H1 (cell line): ENCODE measurements at regions of chr20 and their contacts with region 1.

Region 1: GRCh38 chr20:31587545-31588389 is 17.3 kb upstream of the ID1 start:
- DNase-seq: no peak
- H3K4me3 ChIP-seq: peak overlapping the region; percentile 12 to 56 (median 34); a peak in 7 of 8 replicates
- H3K27ac ChIP-seq: no peak overlapping the region
- H3K4me1 ChIP-seq: peaks cover 8 to 31% (median 25%) of the 10 kb centered on the region in 4 experiments
- H3K27me3 ChIP-seq: peaks cover 0 to 15% (median 7%) of the 10 kb centered on the region in 4 experiments; a peak in 5 of 7 replicates
- CTCF ChIP-seq: no peak
- EP300 ChIP-seq: no peak
- POLR2A ChIP-seq: no peak; a peak in 1 of 3 replicates
- RAD21 ChIP-seq: no peak

Region 2: GRCh38 chr20:31543966-31544598 is 43.7 kb before region 1 on chr20:
- CTCF ChIA-PET with region 1: no interaction called
- POLR2A ChIA-PET with region 1: no interaction called
- DNase-seq: no peak
- H3K4me3 ChIP-seq: no peak overlapping the region
- H3K27ac ChIP-seq: no peak overlapping the region
- H3K4me1 ChIP-seq: no peaks in the 10 kb centered on the region; a peak in 3 of 7 replicates
- H3K27me3 ChIP-seq: no peaks in the 10 kb centered on the region
- CTCF ChIP-seq: no peak
- EP300 ChIP-seq: no peak
- POLR2A ChIP-seq: no peak
- RAD21 ChIP-seq: no peak

Region 3: DNA sequence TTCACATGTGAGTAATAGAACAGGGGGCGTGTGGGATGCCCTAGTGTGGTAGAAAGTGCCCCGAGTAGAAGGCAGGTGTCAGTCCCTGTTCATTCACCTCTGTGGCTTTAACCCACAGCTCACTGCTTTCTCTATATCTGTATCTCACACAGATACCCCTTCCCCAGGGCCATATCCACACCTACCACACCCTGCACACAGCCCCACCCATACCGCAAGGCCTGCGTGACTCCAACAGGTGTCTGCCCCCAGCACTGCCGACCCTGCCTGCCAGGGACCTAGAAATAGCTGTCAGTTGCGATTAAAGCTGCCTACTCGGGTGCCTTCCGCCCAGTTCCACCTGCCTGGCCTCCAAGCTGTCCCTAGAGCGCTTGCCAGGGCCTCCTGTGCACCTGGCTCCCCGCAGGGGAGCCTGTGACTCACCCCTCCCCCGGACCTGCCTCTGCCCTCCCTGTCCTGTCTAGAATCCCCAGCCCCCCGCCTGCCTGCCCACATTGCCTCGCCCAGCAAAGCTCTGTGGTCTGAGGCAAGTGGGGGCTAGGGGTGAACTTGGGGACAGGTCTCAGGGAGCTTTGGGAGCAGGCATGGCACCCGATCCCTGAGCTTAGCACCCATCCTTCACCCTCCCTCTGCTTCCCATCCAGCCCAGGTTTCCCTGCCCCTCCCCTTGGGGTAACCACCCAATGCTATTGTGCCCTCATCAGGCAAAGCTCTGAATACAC is 20.9 kb before region 1 on chr20:
- CTCF ChIA-PET with region 1: interaction called, 67 read pairs
- POLR2A ChIA-PET with region 1: interaction called, 96 read pairs
- DNase-seq: peak in 1 of 2 experiments; percentile 56
- H3K4me3 ChIP-seq: no peak overlapping the region
- H3K27ac ChIP-seq: no peak overlapping the region
- H3K4me1 ChIP-seq: peaks cover 9 to 27% (median 16%) of the 10 kb centered on the region in 4 experiments
- H3K27me3 ChIP-seq: no peaks in the 10 kb centered on the region
- CTCF ChIP-seq: no peak
- EP300 ChIP-seq: no peak; a peak in 1 of 3 replicates
- POLR2A ChIP-seq: peak in 1 of 2 experiments; percentile 15; a peak in 2 of 3 replicates
- RAD21 ChIP-seq: no peak

Region 4: DNA sequence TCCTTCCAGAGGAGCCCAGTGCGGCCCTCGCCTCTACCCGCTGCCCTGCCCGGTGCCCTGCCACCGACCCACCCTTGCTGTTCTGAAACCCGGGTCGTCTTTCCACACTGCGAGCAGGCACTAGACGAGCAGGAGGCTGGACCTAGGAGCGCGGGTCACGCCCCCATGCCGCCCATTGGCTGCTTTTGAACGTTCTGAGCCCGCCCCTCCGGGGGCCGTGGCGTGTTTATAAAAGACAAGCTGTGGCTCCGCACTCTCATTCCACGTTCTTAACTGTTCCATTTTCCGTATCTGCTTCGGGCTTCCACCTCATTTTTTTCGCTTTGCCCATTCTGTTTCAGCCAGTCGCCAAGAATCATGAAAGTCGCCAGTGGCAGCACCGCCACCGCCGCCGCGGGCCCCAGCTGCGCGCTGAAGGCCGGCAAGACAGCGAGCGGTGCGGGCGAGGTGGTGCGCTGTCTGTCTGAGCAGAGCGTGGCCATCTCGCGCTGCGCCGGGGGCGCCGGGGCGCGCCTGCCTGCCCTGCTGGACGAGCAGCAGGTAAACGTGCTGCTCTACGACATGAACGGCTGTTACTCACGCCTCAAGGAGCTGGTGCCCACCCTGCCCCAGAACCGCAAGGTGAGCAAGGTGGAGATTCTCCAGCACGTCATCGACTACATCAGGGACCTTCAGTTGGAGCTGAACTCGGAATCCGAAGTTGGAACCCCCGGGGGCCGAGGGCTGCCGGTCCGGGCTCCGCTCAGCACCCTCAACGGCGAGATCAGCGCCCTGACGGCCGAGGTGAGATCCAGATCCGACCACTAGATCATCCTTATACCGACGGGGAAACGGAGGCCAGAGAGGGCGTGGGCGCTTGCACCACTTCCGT is 17.5 kb after region 1 on chr20 and contains the start of gene ID1:
- CTCF ChIA-PET with region 1: interaction called, 75 read pairs
- POLR2A ChIA-PET with region 1: interaction called, 281 read pairs
- DNase-seq: peak; percentile 84 to 93
- H3K4me3 ChIP-seq: peak within 1 kb of the TSS; percentile 72 to 99 (median 88)
- H3K27ac ChIP-seq: peak within 1 kb of the TSS; percentile 64
- H3K4me1 ChIP-seq: peaks cover 19 to 36% (median 26%) of the 10 kb centered on the region in 4 experiments
- H3K27me3 ChIP-seq: peaks cover 0 to 4% (median 0%) of the 10 kb centered on the region in 4 experiments; a peak in 2 of 7 replicates
- CTCF ChIP-seq: no peak
- EP300 ChIP-seq: no peak
- POLR2A ChIP-seq: peak; percentile 81 to 96
- RAD21 ChIP-seq: no peak
- total RNA-seq, gene ID1: 120 and 131 TPM in 2 replicates